HepG2 (cell line): ENCODE measurements at regions of chr4 and their contacts with region 1.

Region 1: DNA sequence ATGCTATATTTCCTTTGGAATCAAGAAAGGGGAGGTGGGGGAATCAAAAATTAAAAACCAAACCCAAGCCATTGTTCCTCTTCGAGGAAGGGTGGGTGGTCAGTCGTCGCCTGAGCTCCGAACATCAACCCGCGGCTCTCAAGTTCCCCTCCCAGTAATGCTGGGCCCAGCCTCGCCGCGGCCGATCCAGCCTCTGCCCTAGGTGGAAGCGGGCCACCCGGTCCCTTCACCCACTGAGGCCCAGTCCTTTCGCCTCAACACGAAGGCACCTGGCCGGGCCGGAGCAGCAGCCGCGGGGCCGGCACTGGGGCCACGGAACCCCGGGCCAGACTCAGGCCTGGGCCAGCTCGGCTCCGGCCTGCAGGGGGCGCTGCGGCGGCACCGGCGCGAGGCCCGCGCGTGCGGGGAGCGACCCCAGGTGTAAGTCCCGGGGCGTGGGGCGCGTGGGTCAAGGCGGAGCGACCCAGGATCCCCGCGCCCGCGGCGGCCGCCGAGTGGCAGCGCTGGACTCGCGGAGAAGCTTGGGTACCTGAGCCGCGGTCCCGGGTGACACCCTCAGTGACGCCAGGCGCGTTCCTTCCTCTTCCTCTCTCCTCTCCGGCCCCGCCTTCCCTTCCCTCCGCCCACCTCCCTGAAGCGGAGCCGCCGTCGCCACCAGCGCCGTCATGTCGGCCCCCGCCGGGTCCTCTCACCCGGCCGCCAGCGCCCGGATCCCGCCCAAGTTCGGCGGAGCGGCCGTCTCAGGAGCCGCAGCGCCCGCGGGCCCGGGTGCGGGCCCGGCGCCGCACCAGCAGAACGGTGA is at the start of gene SEC24B:
- DNase-seq: peak; percentile 73
- ATAC-seq: peak; percentile 92
- H3K4me3 ChIP-seq: peak within 1 kb of the TSS; percentile 81 to 93 (median 86)
- H3K27ac ChIP-seq: peak within 1 kb of the TSS; percentile 81
- H3K4me1 ChIP-seq: peaks cover 43% of the 10 kb centered on the region
- H3K27me3 ChIP-seq: no peaks in the 10 kb centered on the region; a peak in 1 of 5 replicates
- CTCF ChIP-seq: peak; percentile 73
- EP300 ChIP-seq: no peak
- POLR2A ChIP-seq: peak; percentile 69 to 77
- RAD21 ChIP-seq: peak; percentile 86
- total RNA-seq, gene SEC24B: 14.6 and 22.9 TPM in 2 replicates

Region 2: GRCh38 chr4:109511414-109511813 is 78.0 kb after region 1 on chr4:
- CTCF ChIA-PET with region 1: no interaction called
- POLR2A ChIA-PET with region 1: no interaction called
- in situ Hi-C with region 1: no loop called
- intact Hi-C with region 1: no loop called
- DNase-seq: no peak
- ATAC-seq: no peak
- H3K4me3 ChIP-seq: no peak overlapping the region
- H3K27ac ChIP-seq: no peak overlapping the region
- H3K4me1 ChIP-seq: no peaks in the 10 kb centered on the region
- H3K27me3 ChIP-seq: no peaks in the 10 kb centered on the region
- CTCF ChIP-seq: no peak
- EP300 ChIP-seq: no peak
- POLR2A ChIP-seq: no peak
- RAD21 ChIP-seq: no peak

Region 3: DNA sequence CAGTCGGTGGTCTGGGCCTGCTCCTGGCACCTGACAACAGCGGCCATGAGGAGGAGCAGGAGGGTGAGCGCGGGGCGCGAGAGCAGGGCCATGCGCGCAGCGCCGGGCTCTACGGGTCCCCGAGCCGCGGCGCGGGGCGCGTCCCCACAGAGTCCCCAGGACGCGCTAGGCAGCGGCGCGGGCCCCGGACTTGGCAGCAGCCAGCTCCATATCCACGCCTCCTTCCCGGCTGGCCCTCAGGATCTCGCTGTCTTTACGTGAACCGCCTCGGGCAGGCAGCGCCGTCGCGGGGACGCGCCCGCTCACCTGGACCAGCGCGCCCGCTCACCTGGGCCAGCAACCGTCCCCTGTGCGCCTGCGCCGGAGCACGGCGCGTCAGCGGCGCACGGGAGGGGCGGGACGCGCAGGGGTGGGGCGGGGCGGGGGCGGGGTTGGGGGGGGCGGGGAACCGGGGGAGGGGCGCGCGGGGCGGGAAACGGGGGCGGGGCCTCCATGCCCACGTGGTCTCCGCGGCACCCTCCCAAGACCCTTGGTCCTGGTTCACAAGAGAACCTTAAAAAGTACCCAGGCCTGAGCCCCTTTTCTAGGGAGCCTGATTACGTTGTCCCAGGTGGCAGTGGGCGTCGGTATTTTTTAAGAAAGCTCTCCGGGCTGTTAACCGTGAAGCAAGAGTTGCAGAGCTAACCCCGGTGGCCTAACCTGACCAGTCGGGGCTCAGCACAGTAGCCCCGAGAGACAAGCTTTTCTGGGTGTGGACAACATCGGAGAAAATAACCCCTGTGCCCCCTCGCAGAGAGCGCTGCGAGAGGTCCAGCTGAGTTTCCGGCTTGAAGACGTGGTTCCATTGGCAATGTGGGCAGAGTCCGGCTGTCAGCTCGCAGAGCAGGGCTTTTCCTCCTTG is 296.6 kb after region 1 on chr4 and contains the start of gene PLA2G12A:
- CTCF ChIA-PET with region 1: no interaction called
- POLR2A ChIA-PET with region 1: no interaction called
- in situ Hi-C with region 1: no loop called
- intact Hi-C with region 1: loop called (anchors 10 kb)
- DNase-seq: peak; percentile 68
- ATAC-seq: peak; percentile 96
- H3K4me3 ChIP-seq: peak within 1 kb of the TSS; percentile 79 to 91 (median 88)
- H3K27ac ChIP-seq: peak within 1 kb of the TSS; percentile 81
- H3K4me1 ChIP-seq: peaks cover 25% of the 10 kb centered on the region
- H3K27me3 ChIP-seq: no peaks in the 10 kb centered on the region; a peak in 2 of 5 replicates
- CTCF ChIP-seq: no peak
- EP300 ChIP-seq: no peak
- POLR2A ChIP-seq: peak; percentile 45 to 79; a peak in 2 of 4 replicates
- RAD21 ChIP-seq: peak; percentile 46; the same call in 1 of the 2 replicates
- total RNA-seq, gene PLA2G12A: 38.7 and 61.2 TPM in 2 replicates

Region 4: DNA sequence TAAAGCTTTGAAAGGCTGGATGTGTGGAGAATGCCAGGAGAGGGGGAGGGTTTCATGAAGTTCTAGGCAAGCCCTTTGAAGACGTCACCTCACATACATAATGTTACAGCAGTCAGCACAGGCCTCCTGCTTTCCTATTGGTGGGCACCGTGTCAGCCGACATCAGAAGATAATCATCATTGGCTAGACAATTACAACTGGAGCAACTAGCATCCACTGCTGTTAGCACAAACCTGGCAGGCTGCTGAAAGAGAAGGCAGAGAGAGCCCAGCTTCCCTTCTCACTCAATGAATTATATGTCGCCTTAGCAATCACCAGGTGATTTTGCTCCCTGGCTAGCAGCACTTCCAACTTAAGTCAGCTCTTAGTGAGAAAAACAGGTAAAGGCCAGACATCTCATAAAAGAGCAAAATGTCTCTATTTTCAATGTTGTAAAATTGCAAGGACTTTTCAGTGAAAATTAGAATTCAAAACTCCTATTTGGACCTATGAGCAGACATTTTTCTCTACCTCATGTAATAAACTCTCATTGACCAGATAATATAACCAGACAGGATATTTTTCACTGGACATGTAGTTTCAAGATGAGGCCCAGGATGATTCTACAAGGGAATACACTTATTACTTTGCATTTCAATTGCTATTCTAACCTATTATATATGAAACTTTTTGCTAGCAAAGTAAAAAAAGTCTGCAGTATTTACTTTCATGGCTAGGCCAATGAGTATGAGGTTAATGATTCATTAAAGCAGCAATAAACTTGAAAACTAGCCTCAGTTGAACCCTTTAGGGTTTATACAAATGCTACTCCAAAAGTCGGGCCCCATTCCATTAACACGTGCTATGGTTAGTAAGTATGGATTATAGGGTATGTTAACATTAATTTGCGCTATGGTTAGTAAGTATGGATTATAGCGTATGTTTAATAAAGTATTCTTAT is 760.7 kb after region 1 on chr4:
- CTCF ChIA-PET with region 1: no interaction called
- POLR2A ChIA-PET with region 1: no interaction called
- in situ Hi-C with region 1: loop called (anchors 25 kb)
- intact Hi-C with region 1: no loop called
- DNase-seq: peak; percentile 74
- ATAC-seq: peak; percentile 61
- H3K4me3 ChIP-seq: no peak overlapping the region; a peak in 1 of 6 replicates
- H3K27ac ChIP-seq: peak overlapping the region; percentile 65
- H3K4me1 ChIP-seq: peaks cover 50% of the 10 kb centered on the region
- H3K27me3 ChIP-seq: no peaks in the 10 kb centered on the region; a peak in 1 of 5 replicates
- CTCF ChIP-seq: no peak
- EP300 ChIP-seq: no peak
- POLR2A ChIP-seq: peak; percentile 78 to 89
- RAD21 ChIP-seq: no peak